ENCODE measurements at regions of chrX and their contacts with region 1.

Region 1: GRCh38 chrX:102950908-102951866 is 14.1 kb downstream of the RAB40AL start:
- DNase-seq: peak; percentile 30 to 65 (median 48)
- ATAC-seq: peak; percentile 91
- H3K4me3 ChIP-seq: no peak overlapping the region
- H3K27ac ChIP-seq: no peak overlapping the region
- H3K4me1 ChIP-seq: no peaks in the 10 kb centered on the region; a peak in 1 of 5 replicates
- H3K27me3 ChIP-seq: no peaks in the 10 kb centered on the region
- CTCF ChIP-seq: peak; percentile 67 to 68 (median 68)
- EP300 ChIP-seq: no peak
- POLR2A ChIP-seq: no peak
- RAD21 ChIP-seq: peak; percentile 31 to 51; a peak in 3 of 4 replicates

Region 2: DNA sequence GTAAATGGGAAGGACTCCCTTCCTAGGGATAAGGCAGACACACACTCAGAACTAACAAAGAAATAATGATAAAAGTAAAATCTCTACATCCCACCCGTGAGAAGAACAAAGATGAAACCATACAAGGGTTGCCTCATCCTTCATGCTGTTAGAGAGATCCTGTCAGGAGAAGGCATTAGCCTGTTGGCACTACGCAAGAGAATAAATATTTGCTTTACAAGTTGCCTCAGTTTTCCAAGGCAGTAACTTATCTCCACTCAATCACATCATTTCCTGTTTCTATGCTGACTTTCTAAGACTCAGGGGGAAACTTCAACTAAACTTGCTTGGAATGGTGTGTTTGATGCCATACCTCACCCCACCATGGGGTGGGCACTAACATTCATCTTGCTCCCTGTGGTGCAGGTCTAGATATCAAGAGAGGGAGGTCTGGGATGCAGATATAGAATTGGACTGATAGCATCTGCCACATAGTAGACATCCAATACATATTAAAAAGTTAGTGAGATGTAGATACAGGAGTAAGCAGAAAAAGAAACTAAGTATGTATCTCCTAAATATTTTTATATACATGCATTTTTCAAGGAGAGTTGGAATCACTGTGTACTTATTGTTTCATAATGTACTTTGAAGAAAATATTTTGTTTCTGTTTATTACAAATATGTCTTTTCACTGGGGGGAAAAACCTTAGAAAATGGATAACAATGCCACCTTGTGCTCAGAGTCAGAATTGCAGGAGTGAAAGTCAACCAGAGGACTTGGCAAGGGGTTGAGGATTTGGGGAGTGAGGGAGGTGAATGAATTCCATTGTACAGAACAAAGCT is 206.5 kb after region 1 on chrX:
- CTCF ChIA-PET with region 1: interaction called, 4 read pairs
- POLR2A ChIA-PET with region 1: no interaction called
- in situ Hi-C with region 1: no loop called
- intact Hi-C with region 1: loop called (anchors 1 kb)
- DNase-seq: peak; percentile 29 to 60 (median 33)
- ATAC-seq: peak; percentile 71; the same call in 2 of the 3 replicates
- H3K4me3 ChIP-seq: no peak overlapping the region
- H3K27ac ChIP-seq: no peak overlapping the region
- H3K4me1 ChIP-seq: no peaks in the 10 kb centered on the region
- H3K27me3 ChIP-seq: no peaks in the 10 kb centered on the region
- CTCF ChIP-seq: peak; percentile 59 to 75 (median 64); a peak in 5 of 6 replicates
- EP300 ChIP-seq: no peak
- POLR2A ChIP-seq: no peak
- RAD21 ChIP-seq: peak; percentile 57 to 77

Region 3: DNA sequence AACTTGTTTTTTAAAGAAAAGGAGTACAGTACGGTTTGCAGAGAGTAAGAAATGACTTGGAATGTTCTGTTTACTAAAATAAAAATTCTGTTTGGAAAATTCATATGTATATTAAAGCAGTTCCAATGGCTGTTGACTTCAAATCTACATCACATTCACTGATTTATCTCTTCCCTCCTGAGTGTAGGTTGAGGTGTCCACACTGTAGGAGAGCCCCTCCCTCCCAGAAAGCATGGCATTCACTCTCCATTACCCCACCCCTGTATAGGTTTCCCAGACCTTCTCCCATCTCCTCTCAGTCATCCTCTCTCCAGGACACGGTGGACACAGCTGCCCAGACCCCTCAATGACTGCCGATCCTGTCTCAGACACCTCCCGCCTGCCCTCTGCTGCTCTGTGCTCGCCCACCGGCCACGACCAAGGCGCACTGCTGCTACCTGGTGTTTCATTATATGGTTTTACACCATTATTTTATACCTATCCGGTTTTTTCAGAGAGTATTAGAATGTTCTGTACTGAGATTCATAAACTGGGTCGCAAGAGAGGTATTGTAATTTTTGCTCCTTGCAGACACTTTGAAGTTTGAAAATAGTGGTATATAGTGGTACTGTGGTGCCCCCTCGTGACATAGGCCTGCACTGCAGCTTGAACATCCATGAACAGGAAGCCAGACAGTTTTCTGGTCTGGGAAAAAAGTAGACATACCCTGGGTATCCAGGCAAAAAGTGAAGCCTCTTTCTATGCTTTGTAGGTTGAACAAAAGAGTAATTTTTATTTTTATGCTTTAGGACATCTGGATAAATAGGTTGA is 225.0 kb after region 1 on chrX:
- CTCF ChIA-PET with region 1: interaction called, 14 read pairs
- POLR2A ChIA-PET with region 1: interaction called, 3 read pairs
- in situ Hi-C with region 1: loop called (anchors 5 kb)
- intact Hi-C with region 1: loop called (anchors 2 kb)
- DNase-seq: peak; percentile 49 to 67 (median 54)
- ATAC-seq: peak; percentile 88
- H3K4me3 ChIP-seq: no peak overlapping the region
- H3K27ac ChIP-seq: no peak overlapping the region
- H3K4me1 ChIP-seq: peaks cover 0 to 3% of the 10 kb centered on the region in 2 experiments; a peak in 2 of 5 replicates
- H3K27me3 ChIP-seq: no peaks in the 10 kb centered on the region; a peak in 1 of 5 replicates
- CTCF ChIP-seq: peak; percentile 63 to 79 (median 79)
- EP300 ChIP-seq: no peak
- POLR2A ChIP-seq: no peak
- RAD21 ChIP-seq: peak; percentile 63 to 81

Region 4: DNA sequence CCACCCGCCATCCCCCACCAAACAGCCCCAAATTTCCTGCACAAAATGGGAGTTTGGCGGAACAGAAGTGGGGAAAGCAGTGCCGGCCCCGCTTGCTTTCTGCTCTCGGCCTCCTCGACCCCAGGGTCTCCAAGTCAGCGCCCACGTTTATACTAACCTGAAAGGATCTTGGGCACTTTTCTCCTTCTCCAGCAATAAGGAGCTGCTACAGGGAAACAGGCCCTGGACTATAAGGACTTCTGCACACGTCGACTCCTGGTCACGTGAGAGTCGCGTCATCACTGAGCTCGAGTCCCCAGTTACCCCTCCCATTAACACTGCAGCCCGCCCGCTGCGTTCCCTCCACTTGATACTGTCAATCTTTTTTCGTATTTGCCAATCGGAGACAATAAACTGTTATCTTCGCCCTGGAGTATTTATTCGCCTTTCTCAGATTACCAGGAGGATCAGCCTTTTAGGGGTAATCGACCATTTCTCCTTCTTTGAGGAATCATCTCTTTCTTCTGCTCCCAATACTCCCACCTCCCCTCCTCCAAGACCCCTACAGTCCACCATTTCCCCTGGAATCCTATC is 303.8 kb after region 1 on chrX and contains the start of gene TCEAL8:
- CTCF ChIA-PET with region 1: no interaction called
- POLR2A ChIA-PET with region 1: no interaction called
- in situ Hi-C with region 1: no loop called
- intact Hi-C with region 1: loop called (anchors 5 kb)
- DNase-seq: peak; percentile 75 to 89 (median 79)
- ATAC-seq: peak; percentile 87
- H3K4me3 ChIP-seq: peak within 1 kb of the TSS; percentile 60
- H3K27ac ChIP-seq: peak within 1 kb of the TSS; percentile 79
- H3K4me1 ChIP-seq: peaks cover 6 to 43% of the 10 kb centered on the region in 2 experiments; a peak in 4 of 5 replicates
- H3K27me3 ChIP-seq: no peaks in the 10 kb centered on the region
- CTCF ChIP-seq: no peak
- EP300 ChIP-seq: no peak
- POLR2A ChIP-seq: peak; percentile 65
- RAD21 ChIP-seq: no peak
- polyA plus RNA-seq, gene TCEAL8: 153 to 178 TPM

Region 5: DNA sequence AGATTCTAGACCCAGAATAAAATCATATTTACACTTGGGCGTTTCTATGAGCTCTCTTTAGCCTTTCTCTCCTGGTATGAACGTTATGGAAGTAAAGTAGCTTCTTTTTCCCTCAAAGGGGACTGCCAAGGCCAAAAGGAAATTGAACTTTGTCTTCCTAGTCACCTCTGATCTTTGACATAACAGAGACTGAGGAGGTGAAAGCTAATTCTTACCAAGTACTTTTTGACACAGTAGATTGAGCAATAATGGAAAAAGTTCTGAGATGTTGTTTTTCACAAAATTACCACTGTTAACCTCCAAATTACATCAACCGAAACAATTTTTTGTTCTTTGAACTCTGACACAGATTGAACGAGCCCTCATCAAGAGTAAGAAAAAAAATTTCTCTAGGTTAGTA is 1950.9 kb after region 1 on chrX:
- CTCF ChIA-PET with region 1: no interaction called
- POLR2A ChIA-PET with region 1: no interaction called
- in situ Hi-C with region 1: no loop called
- intact Hi-C with region 1: no loop called
- DNase-seq: no peak
- ATAC-seq: no peak
- H3K4me3 ChIP-seq: no peak overlapping the region
- H3K27ac ChIP-seq: no peak overlapping the region
- H3K4me1 ChIP-seq: no peaks in the 10 kb centered on the region
- H3K27me3 ChIP-seq: no peaks in the 10 kb centered on the region
- CTCF ChIP-seq: no peak
- EP300 ChIP-seq: no peak
- POLR2A ChIP-seq: no peak
- RAD21 ChIP-seq: no peak